ENCODE measurements at regions of chr22 and their contacts with region 1.

Region 1: DNA sequence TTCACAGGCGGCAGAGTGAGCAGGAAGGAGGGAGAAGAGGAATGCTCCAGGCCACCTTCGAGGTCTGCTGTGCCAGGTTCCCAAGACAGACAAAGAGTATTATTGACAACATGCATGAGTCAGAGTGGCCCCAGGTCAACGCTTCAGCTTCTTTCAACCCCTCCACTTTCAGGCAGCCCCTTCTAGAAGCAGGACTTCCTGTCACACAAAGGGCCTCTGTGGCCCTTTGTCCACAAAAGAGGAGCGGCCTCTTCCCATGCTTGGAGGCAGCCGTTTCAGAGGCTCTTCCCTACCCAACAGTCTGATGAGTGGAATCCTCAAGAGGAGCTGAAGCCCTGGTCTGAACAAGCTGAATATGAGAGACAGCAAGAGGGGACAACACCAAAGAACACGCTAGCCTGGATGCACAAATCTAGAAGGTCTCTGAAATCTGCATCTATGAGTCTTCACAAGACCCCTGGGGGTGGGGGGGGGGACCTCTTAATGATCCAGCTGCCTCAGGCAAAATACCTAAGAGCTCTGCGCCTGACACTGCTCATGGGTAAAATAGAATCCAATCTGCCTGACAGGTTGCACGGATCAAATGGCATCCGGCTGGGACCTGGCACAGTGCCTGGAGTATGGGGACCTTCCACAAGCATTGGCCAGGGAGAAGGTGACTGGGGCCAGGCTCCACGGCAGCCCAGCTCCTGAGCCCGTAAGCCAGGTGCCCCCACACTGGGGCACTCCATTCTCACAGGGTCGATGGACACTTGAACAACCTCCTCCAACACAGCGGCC is 67.5 kb downstream of the PACSIN2 start:
- DNase-seq: peak in 1 of 2 donors; percentile 63
- H3K4me3 ChIP-seq: no peak overlapping the region
- H3K27ac ChIP-seq: peak overlapping the region in 1 of 2 donors; percentile 37
- H3K4me1 ChIP-seq: peaks cover 37 to 72% of the 10 kb centered on the region in 2 donors
- H3K27me3 ChIP-seq: no peaks in the 10 kb centered on the region
- CTCF ChIP-seq: no peak

Region 2: GRCh38 chr22:42906605-42907348 is 40.6 kb before region 1 on chr22:
- intact Hi-C with region 1: loop called (anchors 5 kb)
- DNase-seq: no peak
- H3K4me3 ChIP-seq: no peak overlapping the region
- H3K27ac ChIP-seq: peak overlapping the region; percentile 66 to 87
- H3K4me1 ChIP-seq: peaks cover 30 to 54% of the 10 kb centered on the region in 2 donors
- H3K27me3 ChIP-seq: no peaks in the 10 kb centered on the region
- CTCF ChIP-seq: no peak

Region 3: GRCh38 chr22:42959576-42960509 is 12.4 kb after region 1 on chr22:
- intact Hi-C with region 1: loop called (anchors 1 kb)
- DNase-seq: peak in 1 of 2 donors; percentile 85
- H3K4me3 ChIP-seq: peak overlapping the region; percentile 35
- H3K27ac ChIP-seq: peak overlapping the region; percentile 1 to 35
- H3K4me1 ChIP-seq: peaks cover 9 to 47% of the 10 kb centered on the region in 2 donors
- H3K27me3 ChIP-seq: no peaks in the 10 kb centered on the region
- CTCF ChIP-seq: no peak